Breast epithelium (tissue), 4 donors: ENCODE measurements at regions of chr1 and their contacts with region 1.

Region 1: DNA sequence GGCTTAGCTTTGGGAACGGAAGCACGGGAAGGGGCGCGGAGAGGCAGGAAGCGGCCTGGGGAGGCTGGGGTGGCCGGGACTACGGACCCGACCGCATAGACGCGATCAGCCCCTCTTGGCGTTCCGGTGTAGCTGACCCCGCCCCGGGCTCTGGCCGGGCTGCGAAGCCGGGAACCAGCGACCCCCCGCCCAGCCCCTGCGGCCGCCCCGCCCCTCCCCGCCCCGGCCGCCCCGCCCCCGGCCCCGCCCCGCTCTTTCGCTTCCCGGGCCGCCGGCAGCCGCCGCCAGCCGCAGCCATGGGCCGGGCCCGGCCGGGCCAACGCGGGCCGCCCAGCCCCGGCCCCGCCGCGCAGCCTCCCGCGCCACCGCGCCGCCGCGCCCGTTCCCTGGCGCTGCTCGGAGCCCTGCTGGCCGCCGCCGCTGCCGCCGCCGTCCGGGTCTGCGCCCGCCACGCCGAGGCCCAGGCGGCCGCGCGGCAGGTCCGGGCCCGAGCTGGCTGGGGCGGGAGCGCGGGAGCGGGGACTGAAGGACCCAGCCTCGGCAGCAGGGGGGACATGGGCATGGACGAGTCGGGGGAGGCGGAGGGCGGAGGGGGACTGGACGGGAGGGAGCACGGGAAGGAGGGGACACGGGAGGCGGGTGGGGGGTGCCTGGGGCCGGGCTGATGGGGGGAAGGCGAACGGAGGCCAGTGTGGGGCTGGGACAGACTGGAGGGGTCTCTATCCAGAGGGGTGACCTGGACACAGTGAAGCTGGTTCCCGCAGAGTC is at the start of gene SELENON:
- DNase-seq: peak; percentile 42 to 59
- H3K4me3 ChIP-seq: peak within 1 kb of the TSS; percentile 56 to 89 (median 65)
- H3K27ac ChIP-seq: peak within 1 kb of the TSS; percentile 84 to 94
- H3K4me1 ChIP-seq: peaks cover 5 to 13% of the 10 kb centered on the region in 2 donors
- H3K27me3 ChIP-seq: no peaks in the 10 kb centered on the region
- CTCF ChIP-seq: no peak
- POLR2A ChIP-seq: no peak
- total RNA-seq, gene SELENON: 16.6 to 39.0 (median 22.1) TPM

Region 2: DNA sequence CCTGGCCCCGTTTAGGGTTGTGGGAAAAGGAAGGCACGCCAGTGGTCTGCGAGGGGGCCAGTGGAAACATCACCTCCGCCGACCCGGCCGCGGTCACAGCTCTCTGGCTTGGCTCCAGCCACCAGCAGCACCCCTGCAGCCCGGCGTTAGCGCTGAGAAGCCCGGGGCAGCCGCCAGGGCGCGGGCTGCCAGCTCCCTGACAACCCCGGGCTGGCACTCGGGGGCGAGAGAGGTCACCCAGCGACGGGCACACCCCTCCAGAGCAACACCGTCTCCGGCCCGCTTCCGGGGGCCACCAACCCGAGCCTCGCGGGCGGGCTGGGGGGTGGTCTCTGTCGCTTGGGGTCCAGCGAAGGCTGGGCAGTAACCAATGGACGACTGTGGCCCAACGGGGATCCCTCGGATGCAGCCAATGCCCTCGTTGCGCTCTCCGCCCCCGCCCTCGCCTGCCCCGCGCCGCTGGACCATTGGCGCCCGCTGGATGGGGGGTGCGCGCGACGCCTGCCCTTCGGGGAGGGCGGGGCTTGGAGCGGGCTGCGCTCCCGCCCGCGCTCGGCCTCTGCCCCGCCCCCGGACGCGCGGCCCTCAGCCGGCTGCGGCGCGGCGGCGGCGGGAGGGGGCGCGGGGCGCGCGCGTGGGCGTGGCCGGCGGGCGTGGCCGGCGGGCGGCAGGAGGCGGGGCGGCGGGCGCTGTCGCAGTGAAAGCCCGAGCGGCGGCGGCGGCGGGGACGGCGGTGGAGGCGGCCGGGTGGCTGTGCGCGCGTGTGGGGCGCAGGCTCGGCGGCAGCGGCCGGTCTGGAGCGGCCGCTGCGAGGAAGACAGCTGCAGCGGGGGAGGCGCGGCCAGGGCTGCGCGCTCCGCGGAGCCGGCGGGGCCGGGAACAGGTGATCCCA is 183.8 kb before region 1 on chr1 and contains the start of gene MAN1C1:
- intact Hi-C with region 1: loop called (anchors 10 kb)
- DNase-seq: peak; percentile 66 to 69
- H3K4me3 ChIP-seq: peak within 1 kb of the TSS; percentile 81 to 87 (median 86)
- H3K27ac ChIP-seq: peak within 1 kb of the TSS; percentile 77
- H3K4me1 ChIP-seq: no peaks in the 10 kb centered on the region
- H3K27me3 ChIP-seq: no peaks in the 10 kb centered on the region
- CTCF ChIP-seq: peak in 1 of 3 donors; percentile 47
- POLR2A ChIP-seq: no peak
- total RNA-seq, gene MAN1C1: 6.7 to 13.8 (median 6.9) TPM